MCF 10A (cell line): ENCODE measurements at regions of chr12 and their contacts with region 1.

Region 1: DNA sequence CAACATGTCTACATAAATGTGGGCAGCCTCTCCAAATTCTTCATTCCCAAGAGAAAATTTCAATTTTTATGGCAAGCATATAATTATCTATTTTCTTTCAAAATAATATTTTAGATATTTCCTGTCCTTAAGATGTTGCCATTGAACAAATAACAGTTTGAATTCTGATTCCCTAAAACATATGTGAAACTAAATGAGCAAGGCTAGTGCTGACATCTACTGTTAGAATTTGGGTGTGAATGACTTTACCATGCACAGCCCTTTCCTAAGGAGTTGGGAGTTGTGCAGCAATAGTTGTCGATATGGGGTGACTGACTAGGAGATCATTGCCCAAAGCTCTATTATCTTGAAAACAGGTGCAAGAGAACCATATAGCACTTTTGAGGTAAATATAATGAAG is 108.2 kb upstream of the SLC38A4 start:
- DNase-seq: peak; percentile 68
- H3K4me3 Mint-ChIP-seq: no peak overlapping the region
- H3K27ac Mint-ChIP-seq: no peak overlapping the region
- H3K4me1 Mint-ChIP-seq: peaks cover 6% of the 10 kb centered on the region
- H3K27me3 Mint-ChIP-seq: no peaks in the 10 kb centered on the region
- CTCF ChIP-seq: peak; percentile 71

Region 2: DNA sequence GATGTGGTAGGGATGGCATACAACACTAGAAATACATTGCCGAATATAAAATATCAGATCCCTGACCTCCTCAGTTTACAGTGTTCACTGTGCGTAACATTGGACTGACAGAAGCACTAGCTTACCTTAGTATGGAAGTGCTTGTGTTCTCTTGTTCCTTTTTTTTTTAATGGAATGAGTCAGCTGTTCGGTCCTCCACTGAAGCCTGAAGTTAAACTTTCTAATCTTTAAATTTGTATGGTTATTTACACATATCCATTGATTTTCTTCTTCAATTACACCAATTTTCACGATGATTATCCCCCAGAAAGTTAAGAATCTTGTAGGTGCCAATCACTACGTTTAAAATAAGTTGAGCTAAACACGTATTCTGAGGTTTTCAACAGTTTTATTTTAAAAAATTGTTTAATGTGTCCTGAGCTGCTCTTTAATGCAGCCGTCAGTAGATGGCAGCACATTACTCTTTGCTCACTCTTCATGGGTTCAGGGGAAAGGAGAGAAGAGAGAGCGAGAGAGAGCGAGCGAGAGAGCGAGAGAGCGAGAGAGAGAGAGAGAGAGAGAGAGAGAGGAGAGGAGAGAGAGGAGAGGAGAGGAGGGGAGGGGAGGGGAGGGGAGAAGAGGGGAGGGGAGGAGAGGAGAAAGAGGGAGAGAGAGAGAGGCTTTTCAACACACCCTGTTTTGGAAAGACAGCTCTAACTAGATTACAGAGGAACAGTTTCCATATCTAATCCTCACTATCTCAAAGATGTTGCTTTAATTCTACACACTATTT is 808.9 kb before region 1 on chr12:
- CTCF ChIA-PET with region 1: interaction called, 30 read pairs
- POLR2A ChIA-PET with region 1: interaction called, 4 read pairs
- intact Hi-C with region 1: loop called (anchors 1 kb)
- DNase-seq: peak; percentile 87
- H3K4me3 Mint-ChIP-seq: peak overlapping the region; percentile 64
- H3K27ac Mint-ChIP-seq: peak overlapping the region; percentile 28
- H3K4me1 Mint-ChIP-seq: peaks cover 13% of the 10 kb centered on the region
- H3K27me3 Mint-ChIP-seq: peaks cover 16% of the 10 kb centered on the region
- CTCF ChIP-seq: peak; percentile 69

Region 3: DNA sequence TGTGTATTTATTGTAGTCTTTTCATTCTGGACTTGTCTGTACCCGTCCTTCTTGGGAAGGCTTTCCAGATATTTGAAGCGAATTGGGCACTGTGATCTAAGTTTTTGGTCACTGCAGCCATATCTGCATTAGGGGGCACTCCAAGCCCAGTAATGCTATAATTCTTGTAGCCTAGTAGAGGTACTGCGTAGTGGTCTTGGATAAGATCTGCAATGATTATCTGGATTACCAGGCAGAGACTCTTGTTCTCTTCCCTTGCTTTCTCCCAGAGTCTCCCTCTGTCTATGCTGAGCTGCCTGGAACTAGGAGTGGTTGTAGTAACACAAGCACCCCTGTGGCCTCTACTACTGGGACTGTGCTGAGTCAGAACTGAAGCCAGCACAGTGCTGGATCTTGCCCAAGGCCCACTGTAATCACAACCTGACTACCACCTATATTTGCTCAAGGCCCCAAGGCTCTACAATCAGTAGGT is 591.3 kb before region 1 on chr12:
- CTCF ChIA-PET with region 1: no interaction called
- POLR2A ChIA-PET with region 1: interaction called, 8 read pairs
- intact Hi-C with region 1: loop called (anchors 5 kb)
- DNase-seq: peak; percentile 63
- H3K4me3 Mint-ChIP-seq: no peak overlapping the region
- H3K27ac Mint-ChIP-seq: peak overlapping the region; percentile 81
- H3K4me1 Mint-ChIP-seq: peaks cover 14% of the 10 kb centered on the region
- H3K27me3 Mint-ChIP-seq: no peaks in the 10 kb centered on the region
- CTCF ChIP-seq: peak; percentile 31

Region 4: DNA sequence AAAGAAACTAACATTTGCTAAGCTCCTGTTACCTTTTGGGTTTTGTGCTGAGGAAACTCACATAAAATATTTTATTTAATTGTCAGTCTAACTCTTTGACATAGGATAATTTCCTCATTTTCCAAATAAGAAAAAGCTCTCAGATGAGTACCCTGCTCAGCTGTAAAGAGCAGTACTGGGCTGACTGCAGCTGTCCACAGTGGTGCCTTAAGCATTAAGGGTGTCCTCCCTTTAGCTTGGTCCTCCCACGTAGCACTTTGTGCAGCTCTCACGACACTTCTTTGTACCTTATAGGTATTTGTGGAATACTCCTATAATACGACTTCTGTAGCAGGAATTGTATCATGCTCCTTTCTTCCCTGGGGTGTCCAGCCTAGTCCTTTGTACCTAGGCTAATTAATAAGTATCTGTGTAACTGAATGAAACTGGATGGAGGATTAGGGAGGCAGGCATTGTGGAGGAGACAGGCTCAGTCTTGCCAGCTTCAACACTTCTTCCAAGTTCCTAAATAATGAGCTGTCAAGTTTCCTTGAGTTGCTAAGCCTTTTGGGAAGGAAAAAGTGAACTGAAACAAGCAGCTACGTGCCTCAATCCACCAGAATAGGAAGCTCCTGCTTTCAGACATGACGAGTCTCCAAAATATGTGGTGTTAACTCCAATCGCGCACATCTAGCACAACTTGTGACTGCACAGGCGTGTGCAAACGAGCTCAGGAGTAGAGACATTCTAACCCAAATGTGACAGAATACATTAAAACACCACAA is 231.2 kb before region 1 on chr12:
- CTCF ChIA-PET with region 1: interaction called, 10 read pairs
- POLR2A ChIA-PET with region 1: interaction called, 10 read pairs
- intact Hi-C with region 1: no loop called
- DNase-seq: peak; percentile 94
- H3K4me3 Mint-ChIP-seq: peak overlapping the region; percentile 64
- H3K27ac Mint-ChIP-seq: peak overlapping the region; percentile 93
- H3K4me1 Mint-ChIP-seq: peaks cover 30% of the 10 kb centered on the region
- H3K27me3 Mint-ChIP-seq: no peaks in the 10 kb centered on the region
- CTCF ChIP-seq: no peak

Region 5: DNA sequence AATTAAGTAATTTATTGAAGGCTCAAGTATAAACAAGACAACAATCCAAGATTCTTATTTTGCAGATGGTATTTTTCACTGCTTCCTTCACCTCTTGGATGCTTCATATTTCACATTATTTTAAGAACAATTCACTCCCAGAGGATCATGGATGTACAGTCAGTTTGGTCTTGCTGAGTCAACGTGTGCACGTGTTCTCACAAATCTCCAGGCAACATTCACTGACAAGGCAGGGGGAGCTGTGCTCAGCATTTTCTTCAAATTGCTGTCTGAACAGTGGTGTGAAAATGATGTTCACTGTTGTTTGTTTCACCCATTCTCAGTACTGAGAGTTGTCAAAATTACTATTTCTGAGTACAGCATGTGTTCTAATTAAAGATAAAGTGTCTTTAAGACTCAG is 10.1 kb after region 1 on chr12:
- CTCF ChIA-PET with region 1: interaction called, 16 read pairs
- POLR2A ChIA-PET with region 1: interaction called, 3 read pairs
- intact Hi-C with region 1: no loop called
- DNase-seq: peak; percentile 69
- H3K4me3 Mint-ChIP-seq: no peak overlapping the region
- H3K27ac Mint-ChIP-seq: no peak overlapping the region
- H3K4me1 Mint-ChIP-seq: peaks cover 6% of the 10 kb centered on the region
- H3K27me3 Mint-ChIP-seq: no peaks in the 10 kb centered on the region
- CTCF ChIP-seq: no peak

Region 6: GRCh38 chr12:47021298-47021697 is 87.4 kb after region 1 on chr12:
- CTCF ChIA-PET with region 1: interaction called, 32 read pairs
- POLR2A ChIA-PET with region 1: no interaction called
- intact Hi-C with region 1: no loop called
- DNase-seq: peak; percentile 86
- H3K4me3 Mint-ChIP-seq: no peak overlapping the region
- H3K27ac Mint-ChIP-seq: no peak overlapping the region
- H3K4me1 Mint-ChIP-seq: peaks cover 34% of the 10 kb centered on the region
- H3K27me3 Mint-ChIP-seq: no peaks in the 10 kb centered on the region
- CTCF ChIP-seq: peak; percentile 57

Region 7: DNA sequence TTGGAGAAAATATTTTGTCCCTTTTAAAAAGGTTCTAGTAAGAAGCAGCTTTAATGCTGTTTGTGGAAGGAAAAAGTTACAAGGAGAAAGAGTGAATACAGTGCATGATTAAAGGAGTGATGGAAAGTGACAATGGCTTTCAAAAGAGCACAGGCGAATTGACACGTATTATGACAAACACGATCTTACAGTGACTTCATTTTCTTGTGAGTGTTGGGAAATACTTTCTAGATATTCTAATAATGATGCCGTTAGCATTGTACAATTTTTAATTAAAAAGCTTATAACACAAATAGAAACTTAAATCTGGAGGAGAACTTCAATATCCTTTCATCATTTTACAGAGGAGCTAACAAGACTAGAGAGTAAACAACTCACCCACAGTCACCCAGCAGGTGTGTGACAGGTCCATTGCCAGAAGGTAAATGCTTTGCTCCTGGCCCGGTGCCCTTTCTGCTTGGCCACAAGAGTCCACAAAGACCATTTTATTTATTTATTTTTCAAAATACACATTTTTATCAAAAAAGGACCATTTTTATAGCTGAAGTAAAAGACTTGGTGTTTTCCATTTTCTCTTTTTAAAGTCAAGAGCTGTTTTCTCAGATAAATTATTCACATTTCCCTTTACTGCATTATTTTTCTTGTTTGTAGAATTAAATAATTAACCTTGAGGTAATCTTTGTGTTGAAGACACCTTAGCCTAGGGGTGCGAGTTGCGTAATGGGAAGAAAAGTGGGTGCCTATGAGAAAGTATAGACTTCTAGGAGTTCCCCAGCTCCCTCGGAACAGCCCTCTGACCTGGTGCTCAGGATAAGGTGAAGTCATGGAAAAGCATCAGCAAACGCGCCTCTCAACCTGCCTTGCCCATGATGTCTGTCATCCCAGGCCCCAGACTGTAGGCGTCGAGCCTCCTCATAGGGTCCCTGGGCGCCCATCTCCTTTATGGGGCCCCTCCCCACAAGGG is 172.0 kb after region 1 on chr12:
- CTCF ChIA-PET with region 1: no interaction called
- POLR2A ChIA-PET with region 1: no interaction called
- intact Hi-C with region 1: no loop called
- DNase-seq: no peak
- H3K4me3 Mint-ChIP-seq: no peak overlapping the region
- H3K27ac Mint-ChIP-seq: no peak overlapping the region
- H3K4me1 Mint-ChIP-seq: peaks cover 6% of the 10 kb centered on the region
- H3K27me3 Mint-ChIP-seq: no peaks in the 10 kb centered on the region
- CTCF ChIP-seq: no peak

Region 8: DNA sequence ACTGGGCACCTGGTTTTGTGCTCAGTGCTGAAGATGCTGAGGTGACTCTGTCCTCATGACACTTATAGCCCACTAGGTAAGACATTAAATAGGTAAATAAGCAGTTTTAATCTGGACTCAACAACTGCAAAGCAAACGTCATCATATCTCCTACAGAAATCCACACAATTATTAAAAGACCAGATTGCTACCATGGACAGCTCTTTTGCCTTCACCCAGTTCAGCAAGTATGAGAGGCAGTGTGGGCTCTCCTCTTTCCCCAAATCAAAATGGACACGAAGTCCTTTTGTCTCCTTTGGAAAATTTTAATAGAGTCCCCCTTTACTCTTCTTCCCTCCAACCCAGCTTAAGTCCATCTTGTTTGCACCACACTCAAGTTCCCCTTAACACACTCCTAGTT is 600.7 kb after region 1 on chr12:
- CTCF ChIA-PET with region 1: no interaction called
- POLR2A ChIA-PET with region 1: no interaction called
- intact Hi-C with region 1: no loop called
- DNase-seq: peak; percentile 37
- H3K4me3 Mint-ChIP-seq: no peak overlapping the region
- H3K27ac Mint-ChIP-seq: no peak overlapping the region
- H3K4me1 Mint-ChIP-seq: no peaks in the 10 kb centered on the region
- H3K27me3 Mint-ChIP-seq: peaks cover 85% of the 10 kb centered on the region
- CTCF ChIP-seq: no peak